Heart right ventricle (tissue), 16 donors: ENCODE measurements at regions of chr7 and their contacts with region 1.

Region 1: GRCh38 chr7:22601812-22602565 is 102.0 kb upstream of the STEAP1B start:
- DNase-seq: no peak
- ATAC-seq: peak in 4 of 8 donors; percentile 31 to 71 (median 42)
- H3K4me3 ChIP-seq: no peak overlapping the region
- H3K27ac ChIP-seq: peak overlapping the region in 4 of 10 donors; percentile 16 to 77 (median 60)
- H3K4me1 ChIP-seq: peaks cover 0 to 22% (median 9%) of the 10 kb centered on the region in 9 donors
- H3K27me3 ChIP-seq: no peaks in the 10 kb centered on the region
- CTCF ChIP-seq: no peak

Region 2: GRCh38 chr7:22617166-22617565 is 15.2 kb after region 1 on chr7:
- intact Hi-C with region 1: loop called in 1 of 10 experiments (anchors 2 kb)
- DNase-seq: no peak
- ATAC-seq: no peak
- H3K4me3 ChIP-seq: no peak overlapping the region
- H3K27ac ChIP-seq: no peak overlapping the region
- H3K4me1 ChIP-seq: no peaks in the 10 kb centered on the region
- H3K27me3 ChIP-seq: no peaks in the 10 kb centered on the region
- CTCF ChIP-seq: no peak

Region 3: DNA sequence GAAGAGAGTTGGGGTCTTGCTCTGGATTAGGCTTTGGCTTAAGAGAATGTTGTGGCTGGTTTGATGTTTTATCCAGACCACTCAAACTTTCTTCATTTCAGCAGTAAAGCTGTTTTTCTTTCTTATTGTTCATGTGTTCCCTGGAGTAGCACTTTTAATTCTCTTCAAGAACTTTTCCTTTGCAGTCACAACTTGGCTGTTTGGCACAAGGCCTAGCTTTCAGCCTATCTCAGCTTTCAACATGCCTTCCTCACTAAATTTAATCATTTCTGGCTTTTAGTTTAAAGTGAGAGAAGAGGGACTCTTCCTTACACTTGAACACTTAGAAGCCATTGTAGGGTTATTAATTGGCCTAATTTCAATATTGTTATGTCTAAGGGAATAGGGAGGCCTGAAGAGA is 1013.3 kb after region 1 on chr7:
- intact Hi-C with region 1: no loop called
- DNase-seq: no peak
- ATAC-seq: no peak
- H3K4me3 ChIP-seq: no peak overlapping the region
- H3K27ac ChIP-seq: no peak overlapping the region
- H3K4me1 ChIP-seq: peaks cover 0 to 11% (median 3%) of the 10 kb centered on the region in 9 donors
- H3K27me3 ChIP-seq: no peaks in the 10 kb centered on the region
- CTCF ChIP-seq: no peak